Activated naive CD4-positive, alpha-beta T cell treated with anti-CD3 and anti-CD28 coated beads for 36 hours (primary cell): ENCODE measurements at regions of chr14 and their contacts with region 1.

Region 1: DNA sequence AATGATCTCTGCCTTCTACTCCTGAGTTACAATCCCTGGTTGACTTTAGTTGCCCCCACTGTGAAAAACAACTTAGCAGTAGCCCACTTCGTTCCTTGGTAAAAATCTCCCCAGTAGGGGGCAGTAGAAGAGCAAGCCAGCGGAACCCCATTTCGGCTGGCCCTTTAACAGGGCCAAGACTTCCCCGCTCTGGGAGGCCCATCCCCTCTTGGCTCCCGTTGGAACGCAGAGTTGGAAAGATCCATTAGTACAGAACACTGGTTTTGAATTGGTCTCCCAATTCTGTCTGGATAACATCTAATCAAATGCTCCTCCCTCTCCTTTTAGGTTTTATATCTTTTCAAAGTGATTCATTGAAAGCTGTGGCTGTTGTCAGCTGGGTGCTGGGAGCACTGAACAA is 1133.3 kb downstream of the BCL11B start:
- DNase-seq: peak; percentile 77
- H3K4me3 Mint-ChIP-seq: peak overlapping the region; percentile 71
- H3K27ac Mint-ChIP-seq: peak overlapping the region; percentile 98
- H3K4me1 Mint-ChIP-seq: peaks cover 81% of the 10 kb centered on the region
- H3K27me3 Mint-ChIP-seq: no peaks in the 10 kb centered on the region

Region 2: DNA sequence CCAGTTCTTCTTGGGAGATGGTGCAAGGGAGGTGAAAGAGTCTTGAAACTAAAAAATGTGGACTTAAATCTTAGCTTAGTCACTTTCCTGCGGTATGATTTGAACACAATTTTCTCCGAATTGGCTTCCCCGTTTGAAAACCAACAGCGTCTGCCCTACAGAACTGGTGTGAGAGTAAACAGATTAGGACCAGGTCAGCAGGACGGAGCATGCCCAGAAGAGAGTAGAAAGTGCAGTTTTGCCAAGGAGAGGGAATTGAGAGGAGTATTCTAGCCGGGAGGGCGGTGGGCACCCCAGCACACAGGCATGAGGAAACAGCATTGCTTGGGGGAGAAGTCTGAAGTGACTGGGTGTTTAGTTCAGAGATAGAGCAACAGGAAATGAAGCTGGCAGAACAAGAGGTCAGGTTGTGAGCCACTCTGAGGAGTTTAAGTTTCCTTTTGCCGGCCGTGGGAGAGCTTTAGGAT is 414.4 kb before region 1 on chr14:
- CTCF ChIA-PET with region 1: no interaction called
- intact Hi-C with region 1: loop called (anchors 5 kb)
- DNase-seq: peak; percentile 64
- H3K4me3 Mint-ChIP-seq: peak overlapping the region; percentile 76
- H3K27ac Mint-ChIP-seq: peak overlapping the region; percentile 96
- H3K4me1 Mint-ChIP-seq: peaks cover 69% of the 10 kb centered on the region
- H3K27me3 Mint-ChIP-seq: no peaks in the 10 kb centered on the region

Region 3: DNA sequence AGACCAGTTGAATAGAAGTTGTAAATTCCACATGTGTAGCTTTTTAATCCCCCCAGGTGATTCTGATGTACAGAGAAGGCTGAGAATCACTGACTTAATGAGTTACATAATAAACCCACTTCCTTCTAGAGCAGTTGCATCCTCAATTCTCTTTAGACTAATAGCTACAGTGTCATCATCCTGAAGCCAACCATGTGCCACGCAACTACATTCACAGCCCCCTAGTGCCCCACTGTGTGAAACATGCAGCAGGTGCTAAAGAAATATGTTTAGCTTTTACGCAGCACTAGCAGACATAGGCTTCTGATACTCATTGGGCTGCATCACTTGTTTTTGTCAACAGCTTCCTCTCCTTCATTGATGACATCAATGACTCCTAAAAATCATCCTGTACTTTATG is 35.0 kb before region 1 on chr14:
- CTCF ChIA-PET with region 1: no interaction called
- intact Hi-C with region 1: loop called (anchors 1 kb)
- DNase-seq: peak; percentile 61
- H3K4me3 Mint-ChIP-seq: no peak overlapping the region
- H3K27ac Mint-ChIP-seq: no peak overlapping the region
- H3K4me1 Mint-ChIP-seq: peaks cover 49% of the 10 kb centered on the region
- H3K27me3 Mint-ChIP-seq: no peaks in the 10 kb centered on the region

Region 4: GRCh38 chr14:98189062-98189461 is 50.4 kb after region 1 on chr14:
- CTCF ChIA-PET with region 1: interaction called, 12 read pairs
- intact Hi-C with region 1: no loop called
- DNase-seq: peak; percentile 62
- H3K4me3 Mint-ChIP-seq: peak overlapping the region; percentile 58
- H3K27ac Mint-ChIP-seq: peak overlapping the region; percentile 96
- H3K4me1 Mint-ChIP-seq: peaks cover 96% of the 10 kb centered on the region
- H3K27me3 Mint-ChIP-seq: no peaks in the 10 kb centered on the region

Region 5: DNA sequence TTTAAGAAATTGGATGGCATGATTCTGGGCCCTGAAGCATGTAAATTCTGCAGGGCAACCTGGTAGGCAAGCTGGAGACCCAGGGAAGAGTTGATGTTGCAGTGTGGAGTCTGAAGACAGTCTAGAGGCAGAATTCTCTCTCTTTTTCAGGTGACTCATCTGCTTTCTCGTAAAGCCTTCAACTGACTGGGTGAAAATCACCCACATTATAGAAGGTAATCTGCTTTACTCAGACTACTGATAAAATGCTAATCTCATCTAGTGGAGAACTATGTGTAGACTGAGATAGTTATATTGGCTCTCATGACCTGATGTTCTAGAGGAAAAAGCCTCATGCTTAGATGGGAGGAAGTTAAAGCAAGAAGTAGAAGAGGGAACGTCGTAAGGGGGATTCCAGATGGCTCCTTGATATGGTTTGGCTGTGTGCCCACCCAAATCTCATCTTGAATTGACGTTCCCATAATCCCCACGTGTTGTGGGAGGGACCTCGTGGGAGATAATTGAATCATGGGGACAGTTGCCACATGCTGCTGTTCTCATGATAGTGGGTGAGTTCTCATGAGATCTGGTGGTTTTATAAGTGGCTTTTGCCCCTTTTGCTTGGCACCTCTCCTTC is 409.5 kb after region 1 on chr14:
- CTCF ChIA-PET with region 1: no interaction called
- intact Hi-C with region 1: loop called (anchors 5 kb)
- DNase-seq: peak; percentile 69
- H3K4me3 Mint-ChIP-seq: peak overlapping the region; percentile 22
- H3K27ac Mint-ChIP-seq: peak overlapping the region; percentile 91
- H3K4me1 Mint-ChIP-seq: peaks cover 22% of the 10 kb centered on the region
- H3K27me3 Mint-ChIP-seq: no peaks in the 10 kb centered on the region